Activated T-helper 2 cell treated with anti-CD3 and anti-CD28 coated beads, Interferon-gamma antibody, Interleukin-2, Interleukin-4, amounts not matched to agents 10 μg/mL and 5 μg/mL and 100 μg/mL, durations not matched to agents 14 hours and 24 hours and 36 hours (primary cell): ENCODE measurements at regions of chr16 and their contacts with region 1.

Region 1: GRCh38 chr16:31868691-31869167 is 4.9 kb upstream of the ZNF267 start:
- DNase-seq: peak; percentile 73
- H3K4me3 Mint-ChIP-seq: peak overlapping the region; percentile 56
- H3K27ac Mint-ChIP-seq: peak overlapping the region; percentile 96
- H3K4me1 Mint-ChIP-seq: peaks cover 48% of the 10 kb centered on the region
- H3K27me3 Mint-ChIP-seq: peaks cover 5% of the 10 kb centered on the region

Region 2: GRCh38 chr16:30984669-30985400 is 883.9 kb before region 1 on chr16 and contains the start of gene HSD3B7:
- intact Hi-C with region 1: loop called (anchors 5 kb)
- DNase-seq: peak; percentile 69
- H3K4me3 Mint-ChIP-seq: peak within 1 kb of the TSS; percentile 8
- H3K27ac Mint-ChIP-seq: peak within 1 kb of the TSS; percentile 33
- H3K4me1 Mint-ChIP-seq: peaks cover 4% of the 10 kb centered on the region
- H3K27me3 Mint-ChIP-seq: no peaks in the 10 kb centered on the region
- total RNA-seq, gene HSD3B7: 2.9 and 3.3 TPM in 2 replicates

Region 3: GRCh38 chr16:31333686-31334649 is 534.8 kb before region 1 on chr16:
- intact Hi-C with region 1: no loop called
- DNase-seq: no peak
- H3K4me3 Mint-ChIP-seq: no peak overlapping the region
- H3K27ac Mint-ChIP-seq: no peak overlapping the region
- H3K4me1 Mint-ChIP-seq: peaks cover 16% of the 10 kb centered on the region
- H3K27me3 Mint-ChIP-seq: peaks cover 30% of the 10 kb centered on the region

Region 4: GRCh38 chr16:31354394-31355291 is 514.1 kb before region 1 on chr16 and contains the start of gene ITGAX:
- intact Hi-C with region 1: loop called (anchors 1 kb)
- DNase-seq: peak; percentile 64
- H3K4me3 Mint-ChIP-seq: peak within 1 kb of the TSS; percentile 86
- H3K27ac Mint-ChIP-seq: peak within 1 kb of the TSS; percentile 97
- H3K4me1 Mint-ChIP-seq: peaks cover 62% of the 10 kb centered on the region
- H3K27me3 Mint-ChIP-seq: no peaks in the 10 kb centered on the region
- total RNA-seq, gene ITGAX: 56.2 and 56.9 TPM in 2 replicates

Region 5: DNA sequence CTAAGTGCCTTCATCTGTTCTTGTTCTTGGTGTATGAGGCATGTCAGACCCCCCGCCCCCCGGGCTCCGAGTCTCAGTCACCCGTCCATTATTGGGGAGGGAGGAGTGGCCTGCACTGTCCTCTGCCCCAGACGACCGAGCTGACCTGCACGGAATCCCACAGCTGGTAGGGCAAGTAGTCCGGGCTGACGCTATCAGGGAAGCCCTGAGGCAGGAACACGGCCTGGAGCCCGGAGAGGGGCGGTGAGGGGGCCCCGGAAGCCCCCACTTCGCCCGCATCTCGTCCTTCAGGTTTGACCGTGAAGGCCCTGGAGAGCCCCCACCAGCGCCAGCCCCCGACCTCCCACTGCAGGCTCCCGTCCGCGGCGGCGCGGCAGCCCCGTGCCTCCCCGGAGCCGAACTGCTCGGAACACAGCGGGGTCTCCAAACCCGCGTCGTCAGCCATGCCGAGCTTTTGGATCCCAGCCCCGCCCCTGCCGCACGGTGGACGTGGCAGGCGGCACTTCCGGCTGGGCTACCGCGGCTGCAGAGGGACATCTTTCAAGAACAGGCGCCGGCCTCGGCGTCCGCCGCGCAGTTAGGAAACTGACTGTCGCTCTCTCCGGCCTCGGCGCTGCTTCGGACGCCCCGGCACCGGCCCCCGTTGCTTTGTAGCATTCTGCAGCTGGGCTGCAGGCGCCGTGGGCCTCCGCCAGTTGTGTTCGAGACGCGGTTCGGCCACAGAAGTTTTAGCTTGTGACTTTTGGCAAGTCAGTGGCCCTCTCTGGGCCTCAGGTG is 360.6 kb before region 1 on chr16 and contains the start of gene RUSF1:
- intact Hi-C with region 1: loop called (anchors 2 kb)
- DNase-seq: peak; percentile 80
- H3K4me3 Mint-ChIP-seq: peak within 1 kb of the TSS; percentile 94
- H3K27ac Mint-ChIP-seq: peak within 1 kb of the TSS; percentile 91
- H3K4me1 Mint-ChIP-seq: peaks cover 30% of the 10 kb centered on the region
- H3K27me3 Mint-ChIP-seq: no peaks in the 10 kb centered on the region
- total RNA-seq, gene RUSF1: 41.2 and 43.8 TPM in 2 replicates

Region 6: DNA sequence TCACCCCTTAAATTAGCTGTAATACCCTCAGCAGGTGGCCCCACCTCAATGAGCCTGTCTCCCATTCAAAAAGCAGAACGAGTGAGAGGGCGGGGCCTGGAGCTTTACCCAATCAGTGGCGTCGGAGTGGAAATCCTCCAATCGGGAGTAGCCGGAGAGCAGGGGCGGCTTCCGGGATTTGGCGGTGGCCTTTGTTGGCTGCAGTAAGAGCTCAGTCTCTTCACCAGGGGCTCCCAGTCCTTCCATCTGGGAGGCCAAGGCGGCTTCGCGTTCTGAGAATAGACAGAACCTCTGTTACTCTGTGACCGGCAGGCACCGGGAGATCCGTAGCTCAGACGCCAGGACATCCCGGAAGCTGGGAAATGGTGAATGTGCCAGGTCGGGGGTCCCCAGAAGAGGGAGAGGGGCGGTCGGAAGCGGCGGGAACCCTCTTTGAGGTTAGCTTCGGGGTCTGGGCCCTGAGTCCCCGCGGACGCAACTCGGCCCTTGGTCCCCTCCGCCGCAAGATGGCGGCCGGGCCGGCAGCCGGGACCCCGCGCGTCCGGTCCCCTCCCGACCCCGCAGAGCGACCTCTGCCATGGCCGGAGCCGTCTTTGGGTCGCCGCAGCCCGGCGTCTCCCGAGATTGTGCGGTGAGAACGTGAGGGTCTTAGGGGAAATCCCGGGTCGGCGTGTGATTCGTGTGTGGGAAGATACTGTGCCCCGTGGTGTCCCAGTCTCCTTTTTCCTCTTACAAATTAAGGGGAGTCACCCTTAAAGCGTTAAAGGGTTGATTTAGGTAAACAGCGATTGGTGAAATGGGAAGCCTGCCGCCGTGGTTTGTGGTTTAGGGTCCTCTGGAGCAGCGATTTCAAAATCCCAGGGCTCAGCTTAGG is 155.4 kb before region 1 on chr16:
- intact Hi-C with region 1: loop called (anchors 2 kb)
- DNase-seq: peak; percentile 87
- H3K4me3 Mint-ChIP-seq: peak overlapping the region; percentile 98
- H3K27ac Mint-ChIP-seq: peak overlapping the region; percentile 99
- H3K4me1 Mint-ChIP-seq: peaks cover 31% of the 10 kb centered on the region
- H3K27me3 Mint-ChIP-seq: no peaks in the 10 kb centered on the region

Region 7: GRCh38 chr16:31888735-31889134 is 20.0 kb after region 1 on chr16:
- intact Hi-C with region 1: no loop called
- DNase-seq: no peak
- H3K4me3 Mint-ChIP-seq: no peak overlapping the region
- H3K27ac Mint-ChIP-seq: peak overlapping the region; percentile 82
- H3K4me1 Mint-ChIP-seq: peaks cover 21% of the 10 kb centered on the region
- H3K27me3 Mint-ChIP-seq: no peaks in the 10 kb centered on the region